Activated CD4-positive, alpha-beta T cell treated with anti-CD3 and anti-CD28 coated beads for 36 hours (primary cell): ENCODE measurements at regions of chrX and their contacts with region 1.

Region 1: DNA sequence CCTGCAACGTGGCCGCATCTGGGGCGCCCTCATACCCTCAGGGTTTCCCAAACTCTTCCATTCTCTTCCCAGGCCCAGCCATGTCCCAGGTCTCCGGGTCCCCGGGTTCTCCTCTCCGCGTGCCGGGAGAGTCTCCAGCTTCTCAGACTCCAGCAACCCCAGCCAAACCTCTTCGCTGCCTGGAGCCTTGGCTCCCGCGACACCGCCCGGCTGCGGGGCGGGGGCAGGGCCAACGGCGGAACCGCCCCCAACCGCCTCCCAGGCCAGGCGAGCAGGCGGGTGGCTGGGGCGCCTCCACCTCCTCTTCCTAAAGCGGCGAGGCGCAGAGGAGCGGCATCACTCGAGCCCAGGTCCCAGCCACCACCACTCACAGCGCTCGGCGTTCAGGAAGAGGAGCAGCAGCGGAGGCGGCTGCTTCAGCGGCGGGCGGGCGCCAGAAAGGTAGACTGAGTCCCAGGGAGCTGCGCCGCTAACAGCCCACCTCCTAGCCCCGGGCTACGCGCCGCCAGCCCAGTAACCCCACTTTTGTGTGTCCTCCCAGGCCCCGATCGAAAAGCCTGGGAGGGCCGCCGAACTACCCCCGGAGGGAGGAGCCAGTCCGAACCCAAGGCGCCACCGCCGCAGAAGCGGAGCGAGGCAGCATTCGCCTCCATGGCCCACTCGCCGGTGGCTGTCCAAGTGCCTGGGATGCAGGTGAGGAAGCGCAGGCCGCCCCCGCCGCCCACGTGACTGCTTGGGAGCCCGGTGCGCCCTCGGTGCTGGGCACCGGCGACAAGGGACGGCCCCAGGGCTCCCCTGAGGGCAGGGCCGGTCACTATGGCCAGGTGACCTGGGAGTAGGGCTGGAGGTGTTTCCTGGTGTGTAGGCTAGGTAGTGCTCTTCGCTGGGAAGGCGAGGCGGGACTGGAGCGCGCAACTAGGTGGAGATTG is at the start of gene STK26:
- DNase-seq: peak; percentile 87
- ATAC-seq: peak; percentile 82
- H3K4me3 Mint-ChIP-seq: peak within 1 kb of the TSS; percentile 88
- H3K27ac Mint-ChIP-seq: peak within 1 kb of the TSS; percentile 93
- H3K4me1 Mint-ChIP-seq: peaks cover 30% of the 10 kb centered on the region
- H3K27me3 Mint-ChIP-seq: no peaks in the 10 kb centered on the region
- total RNA-seq, gene STK26: 72.7 to 93.6 TPM

Region 2: GRCh38 chrX:131589032-131589431 is 434.2 kb before region 1 on chrX:
- CTCF ChIA-PET with region 1: no interaction called
- POLR2A ChIA-PET with region 1: no interaction called
- intact Hi-C with region 1: no loop called
- DNase-seq: no peak
- ATAC-seq: no peak
- H3K4me3 Mint-ChIP-seq: no peak overlapping the region
- H3K27ac Mint-ChIP-seq: no peak overlapping the region
- H3K4me1 Mint-ChIP-seq: no peaks in the 10 kb centered on the region
- H3K27me3 Mint-ChIP-seq: peaks cover 4% of the 10 kb centered on the region

Region 3: GRCh38 chrX:131830400-131831184 is 192.6 kb before region 1 on chrX:
- CTCF ChIA-PET with region 1: no interaction called
- POLR2A ChIA-PET with region 1: interaction called, 3 read pairs
- intact Hi-C with region 1: loop called in 1 of 2 experiments (anchors 2 kb)
- DNase-seq: peak; percentile 76
- ATAC-seq: peak; percentile 89
- H3K4me3 Mint-ChIP-seq: peak overlapping the region; percentile 80
- H3K27ac Mint-ChIP-seq: peak overlapping the region; percentile 86
- H3K4me1 Mint-ChIP-seq: peaks cover 25% of the 10 kb centered on the region
- H3K27me3 Mint-ChIP-seq: no peaks in the 10 kb centered on the region

Region 4: GRCh38 chrX:131862321-131862720 is 160.9 kb before region 1 on chrX:
- CTCF ChIA-PET with region 1: no interaction called
- POLR2A ChIA-PET with region 1: interaction called, 10 read pairs
- intact Hi-C with region 1: no loop called
- DNase-seq: no peak
- ATAC-seq: no peak
- H3K4me3 Mint-ChIP-seq: no peak overlapping the region
- H3K27ac Mint-ChIP-seq: no peak overlapping the region
- H3K4me1 Mint-ChIP-seq: no peaks in the 10 kb centered on the region
- H3K27me3 Mint-ChIP-seq: no peaks in the 10 kb centered on the region

Region 5: GRCh38 chrX:131977619-131978018 is 45.6 kb before region 1 on chrX:
- CTCF ChIA-PET with region 1: no interaction called
- POLR2A ChIA-PET with region 1: interaction called, 15 read pairs
- intact Hi-C with region 1: no loop called
- DNase-seq: peak; percentile 15
- ATAC-seq: no peak
- H3K4me3 Mint-ChIP-seq: no peak overlapping the region
- H3K27ac Mint-ChIP-seq: no peak overlapping the region
- H3K4me1 Mint-ChIP-seq: peaks cover 28% of the 10 kb centered on the region
- H3K27me3 Mint-ChIP-seq: no peaks in the 10 kb centered on the region

Region 6: DNA sequence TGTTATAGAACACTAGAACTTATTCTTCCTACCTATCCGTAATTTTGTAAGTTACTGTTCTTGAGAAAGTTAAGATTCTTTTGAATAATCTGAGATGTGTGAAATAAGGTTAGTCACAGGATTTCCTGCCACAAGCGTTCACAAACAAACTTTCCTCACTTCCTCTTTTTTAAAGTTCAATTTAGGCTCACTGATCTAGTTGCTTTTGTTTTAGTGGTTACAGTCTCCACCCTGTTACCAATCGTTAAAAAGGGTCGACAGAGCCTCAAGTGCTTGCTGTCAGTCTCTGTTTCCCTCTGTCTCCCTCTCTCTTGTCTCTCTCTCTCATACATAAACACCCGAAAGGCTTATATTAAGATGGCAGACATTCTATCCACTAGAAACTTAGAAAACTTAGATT is 36.0 kb before region 1 on chrX:
- CTCF ChIA-PET with region 1: no interaction called
- POLR2A ChIA-PET with region 1: interaction called, 3 read pairs
- intact Hi-C with region 1: loop called in 1 of 2 experiments (anchors 2 kb)
- DNase-seq: no peak
- ATAC-seq: peak; percentile 76
- H3K4me3 Mint-ChIP-seq: peak overlapping the region; percentile 54
- H3K27ac Mint-ChIP-seq: peak overlapping the region; percentile 92
- H3K4me1 Mint-ChIP-seq: peaks cover 62% of the 10 kb centered on the region
- H3K27me3 Mint-ChIP-seq: no peaks in the 10 kb centered on the region

Region 7: GRCh38 chrX:132001127-132001526 is 22.1 kb before region 1 on chrX:
- CTCF ChIA-PET with region 1: interaction called, 5 read pairs
- POLR2A ChIA-PET with region 1: no interaction called
- intact Hi-C with region 1: loop called in 1 of 2 experiments (anchors 2 kb)
- DNase-seq: peak; percentile 50
- ATAC-seq: peak; percentile 97
- H3K4me3 Mint-ChIP-seq: no peak overlapping the region
- H3K27ac Mint-ChIP-seq: peak overlapping the region; percentile 67
- H3K4me1 Mint-ChIP-seq: peaks cover 33% of the 10 kb centered on the region
- H3K27me3 Mint-ChIP-seq: no peaks in the 10 kb centered on the region

Region 8: DNA sequence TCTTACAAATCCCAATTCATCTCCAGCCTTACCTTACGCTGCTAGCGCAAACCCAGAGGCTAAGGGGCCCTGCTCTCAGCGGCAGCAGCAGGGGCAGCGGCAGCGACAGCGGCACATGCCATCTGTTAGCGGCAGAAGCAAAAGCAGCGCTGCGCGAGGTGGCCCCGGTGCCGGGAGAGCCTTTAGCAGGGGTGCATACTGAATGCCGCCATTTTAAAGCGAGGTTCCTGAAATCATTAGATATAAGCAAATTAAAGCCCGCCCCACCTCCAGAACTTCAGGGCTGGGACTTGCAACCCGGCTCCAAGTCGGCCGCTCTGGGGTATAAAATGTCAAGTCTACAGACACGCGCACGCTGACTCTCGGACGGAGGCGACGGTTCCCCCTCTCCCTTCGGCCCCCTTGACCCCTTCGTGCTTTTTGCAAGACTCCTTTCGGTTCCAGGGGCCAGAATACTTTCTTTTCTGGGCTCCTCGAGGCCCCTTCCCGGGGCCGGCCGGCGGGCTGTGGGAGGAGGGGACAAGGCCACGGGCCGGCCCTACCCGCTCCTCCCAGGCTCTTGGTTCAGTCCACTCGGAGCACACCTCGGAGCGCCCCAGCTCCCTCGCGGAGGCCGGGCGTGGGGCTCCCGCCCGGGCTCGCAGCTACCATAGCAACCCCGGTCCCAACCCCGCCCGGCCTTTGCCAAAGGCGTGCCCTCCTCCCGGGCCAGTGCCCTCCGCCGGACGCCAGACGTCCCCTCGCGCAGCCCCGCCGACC is 465.8 kb after region 1 on chrX and contains the start of gene MBNL3:
- CTCF ChIA-PET with region 1: no interaction called
- POLR2A ChIA-PET with region 1: no interaction called
- intact Hi-C with region 1: loop called (anchors 5 to 10 kb)
- DNase-seq: peak; percentile 76
- ATAC-seq: peak; percentile 67
- H3K4me3 Mint-ChIP-seq: peak within 1 kb of the TSS; percentile 86
- H3K27ac Mint-ChIP-seq: peak within 1 kb of the TSS; percentile 98
- H3K4me1 Mint-ChIP-seq: peaks cover 42% of the 10 kb centered on the region
- H3K27me3 Mint-ChIP-seq: no peaks in the 10 kb centered on the region
- total RNA-seq, gene MBNL3: 15.3 to 19.3 TPM